ENCODE measurements at regions of chr11 and their contacts with region 1.

Region 1: GRCh38 chr11:1262172-1263006 is 39.5 kb downstream of the MUC5B start:
- DNase-seq: peak; percentile 84
- H3K4me3 ChIP-seq: peak overlapping the region in 2 of 3 experiments; percentile 48 to 56
- H3K27ac ChIP-seq: peak overlapping the region; percentile 9
- H3K4me1 ChIP-seq: peaks cover 18% of the 10 kb centered on the region
- H3K27me3 ChIP-seq: no peaks in the 10 kb centered on the region
- CTCF ChIP-seq: no peak

Region 2: GRCh38 chr11:1251236-1251770 is 11.1 kb before region 1 on chr11:
- CTCF ChIA-PET with region 1: no interaction called
- dilution Hi-C with region 1: no loop called
- in situ Hi-C with region 1: no loop called
- intact Hi-C with region 1: no loop called
- DNase-seq: no peak
- H3K4me3 ChIP-seq: no peak overlapping the region
- H3K27ac ChIP-seq: no peak overlapping the region
- H3K4me1 ChIP-seq: no peaks in the 10 kb centered on the region
- H3K27me3 ChIP-seq: no peaks in the 10 kb centered on the region
- CTCF ChIP-seq: no peak

Region 3: DNA sequence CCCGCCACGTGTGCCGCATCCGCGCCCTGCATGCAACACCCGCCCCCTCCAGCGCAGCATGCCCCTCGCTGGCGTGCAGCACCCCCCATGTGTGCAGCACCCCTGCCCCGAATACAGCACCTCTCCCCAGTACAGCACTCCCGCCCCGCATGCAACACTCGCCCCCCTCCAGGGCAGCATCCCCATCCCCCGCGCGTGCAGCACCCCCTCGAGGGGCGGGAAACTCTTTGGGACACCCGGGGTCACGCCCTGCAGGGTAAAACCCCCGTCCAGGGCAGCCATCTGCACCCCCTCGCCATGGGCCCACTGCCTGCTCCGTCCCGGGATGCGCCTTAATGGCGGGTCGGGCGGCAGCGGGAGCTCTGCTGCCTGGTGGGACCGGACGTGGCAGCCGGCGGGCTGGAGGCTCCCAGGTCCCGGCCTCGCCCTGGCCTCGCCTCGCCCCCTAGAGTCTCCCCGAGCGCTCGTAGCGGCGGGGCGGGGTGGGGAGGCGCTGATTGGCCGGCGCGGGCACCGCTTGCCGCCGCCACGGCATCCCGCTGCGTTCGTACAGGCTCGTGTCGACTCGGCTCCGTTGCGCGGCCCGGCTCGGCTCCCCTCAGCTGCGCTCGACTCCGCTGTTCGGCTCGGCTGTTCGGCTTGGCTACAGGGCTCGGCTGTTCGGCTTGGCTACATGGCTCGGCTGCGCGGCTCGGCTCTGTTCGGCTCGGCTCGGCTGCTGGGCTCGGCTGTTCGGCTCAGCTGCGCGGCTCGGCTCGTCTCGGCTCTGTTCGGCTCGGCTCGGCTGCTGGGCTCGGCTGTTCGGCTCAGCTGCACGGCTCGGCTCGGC is 126.9 kb after region 1 on chr11:
- CTCF ChIA-PET with region 1: no interaction called
- dilution Hi-C with region 1: no loop called
- in situ Hi-C with region 1: no loop called
- intact Hi-C with region 1: loop called (anchors 10 kb)
- DNase-seq: peak; percentile 92
- H3K4me3 ChIP-seq: peak overlapping the region; percentile 41 to 57 (median 55)
- H3K27ac ChIP-seq: no peak overlapping the region
- H3K4me1 ChIP-seq: peaks cover 9% of the 10 kb centered on the region
- H3K27me3 ChIP-seq: peaks cover 16% of the 10 kb centered on the region
- CTCF ChIP-seq: no peak

Region 4: DNA sequence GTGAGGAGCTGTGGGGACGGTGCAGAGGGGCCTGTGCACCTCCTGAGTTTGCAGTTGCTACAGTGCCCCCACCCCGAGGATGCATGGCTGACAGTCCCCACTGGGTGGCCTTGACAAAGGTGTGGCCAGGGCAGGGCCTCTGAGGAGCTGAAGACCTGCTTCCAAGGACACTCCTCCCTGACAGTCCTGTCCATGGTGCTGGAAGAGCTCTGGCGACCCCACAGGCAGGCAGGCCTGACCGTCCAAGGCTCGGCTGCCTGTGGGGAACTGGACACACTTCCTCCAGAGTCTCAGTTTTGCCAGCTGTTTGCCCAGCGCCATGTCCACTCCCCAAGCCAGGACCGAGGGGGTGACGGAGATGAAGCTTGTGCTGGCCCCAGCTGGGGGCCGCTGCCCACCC is 160.1 kb after region 1 on chr11:
- CTCF ChIA-PET with region 1: no interaction called
- dilution Hi-C with region 1: loop called (anchors 10 kb)
- in situ Hi-C with region 1: no loop called
- intact Hi-C with region 1: no loop called
- DNase-seq: no peak
- H3K4me3 ChIP-seq: no peak overlapping the region
- H3K27ac ChIP-seq: no peak overlapping the region
- H3K4me1 ChIP-seq: no peaks in the 10 kb centered on the region
- H3K27me3 ChIP-seq: no peaks in the 10 kb centered on the region
- CTCF ChIP-seq: no peak

Region 5: GRCh38 chr11:1458340-1459218 is 196.2 kb after region 1 on chr11:
- CTCF ChIA-PET with region 1: no interaction called
- dilution Hi-C with region 1: no loop called
- in situ Hi-C with region 1: no loop called
- intact Hi-C with region 1: no loop called
- DNase-seq: no peak
- H3K4me3 ChIP-seq: no peak overlapping the region
- H3K27ac ChIP-seq: no peak overlapping the region
- H3K4me1 ChIP-seq: no peaks in the 10 kb centered on the region
- H3K27me3 ChIP-seq: no peaks in the 10 kb centered on the region
- CTCF ChIP-seq: peak in 1 of 2 donors; percentile 30

Region 6: DNA sequence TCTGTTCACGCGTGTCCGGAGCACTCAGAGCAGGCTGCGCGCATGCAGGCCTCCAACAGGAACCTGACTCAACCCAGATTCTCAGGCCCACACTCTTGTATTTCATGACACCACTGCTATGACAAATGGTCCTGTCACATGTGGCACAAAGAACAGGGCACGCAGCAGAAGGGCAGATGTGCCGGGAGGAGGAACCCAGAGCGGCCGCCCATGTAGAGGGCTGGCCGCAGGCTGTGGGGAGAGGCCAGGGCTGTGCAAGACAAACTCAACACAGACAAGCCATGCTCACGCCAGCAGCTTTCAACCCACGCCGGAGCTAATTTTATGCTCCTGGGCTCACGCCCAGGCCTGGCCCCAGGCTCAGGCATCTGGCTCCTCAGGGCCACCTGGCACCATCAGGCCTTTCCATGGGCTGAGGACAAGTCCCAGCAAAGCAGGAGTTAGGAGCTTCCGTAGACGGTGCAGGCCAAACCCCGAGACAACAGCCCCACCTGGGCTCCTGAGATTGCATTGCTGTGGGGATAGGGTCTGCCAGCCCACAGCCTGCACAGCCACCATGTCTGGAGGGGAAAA is 269.7 kb after region 1 on chr11:
- CTCF ChIA-PET with region 1: no interaction called
- dilution Hi-C with region 1: no loop called
- in situ Hi-C with region 1: no loop called
- intact Hi-C with region 1: loop called (anchors 1 kb)
- DNase-seq: peak; percentile 79
- H3K4me3 ChIP-seq: no peak overlapping the region
- H3K27ac ChIP-seq: peak overlapping the region; percentile 68
- H3K4me1 ChIP-seq: peaks cover 57% of the 10 kb centered on the region
- H3K27me3 ChIP-seq: no peaks in the 10 kb centered on the region
- CTCF ChIP-seq: peak in 1 of 2 donors; percentile 32

Region 7: GRCh38 chr11:3087821-3088800 is 1825.7 kb after region 1 on chr11:
- CTCF ChIA-PET with region 1: no interaction called
- dilution Hi-C with region 1: no loop called
- in situ Hi-C with region 1: no loop called
- intact Hi-C with region 1: no loop called
- DNase-seq: peak; percentile 39
- H3K4me3 ChIP-seq: no peak overlapping the region
- H3K27ac ChIP-seq: no peak overlapping the region
- H3K4me1 ChIP-seq: peaks cover 12% of the 10 kb centered on the region
- H3K27me3 ChIP-seq: no peaks in the 10 kb centered on the region
- CTCF ChIP-seq: no peak